Heart left ventricle (tissue), 16 donors: ENCODE measurements at regions of chr2 and their contacts with region 1.

Region 1: GRCh38 chr2:32783469-32783868 is 155.6 kb downstream of the TTC27 start:
- DNase-seq: peak in 1 of 5 donors; percentile 16
- ATAC-seq: peak; percentile 63 to 91 (median 85)
- H3K4me3 ChIP-seq: peak overlapping the region in 1 of 12 donors; percentile 8
- H3K27ac ChIP-seq: peak overlapping the region in 10 of 12 donors; percentile 15 to 82 (median 58)
- H3K4me1 ChIP-seq: peaks cover 3 to 31% (median 23%) of the 10 kb centered on the region in 12 donors
- H3K27me3 ChIP-seq: no peaks in the 10 kb centered on the region
- CTCF ChIP-seq: no peak
- POLR2A ChIP-seq: no peak

Region 2: GRCh38 chr2:32688511-32688910 is 95.0 kb before region 1 on chr2:
- intact Hi-C with region 1: no loop called
- DNase-seq: no peak
- ATAC-seq: no peak
- H3K4me3 ChIP-seq: no peak overlapping the region
- H3K27ac ChIP-seq: no peak overlapping the region
- H3K4me1 ChIP-seq: peaks cover 0 to 4% (median 0%) of the 10 kb centered on the region in 12 donors
- H3K27me3 ChIP-seq: no peaks in the 10 kb centered on the region
- CTCF ChIP-seq: no peak
- POLR2A ChIP-seq: no peak

Region 3: GRCh38 chr2:32874931-32875330 is 91.5 kb after region 1 on chr2:
- intact Hi-C with region 1: loop called in 2 of 10 experiments (anchors 5 to 10 kb)
- DNase-seq: no peak
- ATAC-seq: no peak
- H3K4me3 ChIP-seq: peak overlapping the region in 3 of 12 donors; percentile 7 to 20 (median 20)
- H3K27ac ChIP-seq: no peak overlapping the region
- H3K4me1 ChIP-seq: peaks cover 0 to 21% (median 10%) of the 10 kb centered on the region in 12 donors
- H3K27me3 ChIP-seq: no peaks in the 10 kb centered on the region
- CTCF ChIP-seq: no peak
- POLR2A ChIP-seq: no peak